ENCODE measurements at regions of chr6 and their contacts with region 1.

Region 1: DNA sequence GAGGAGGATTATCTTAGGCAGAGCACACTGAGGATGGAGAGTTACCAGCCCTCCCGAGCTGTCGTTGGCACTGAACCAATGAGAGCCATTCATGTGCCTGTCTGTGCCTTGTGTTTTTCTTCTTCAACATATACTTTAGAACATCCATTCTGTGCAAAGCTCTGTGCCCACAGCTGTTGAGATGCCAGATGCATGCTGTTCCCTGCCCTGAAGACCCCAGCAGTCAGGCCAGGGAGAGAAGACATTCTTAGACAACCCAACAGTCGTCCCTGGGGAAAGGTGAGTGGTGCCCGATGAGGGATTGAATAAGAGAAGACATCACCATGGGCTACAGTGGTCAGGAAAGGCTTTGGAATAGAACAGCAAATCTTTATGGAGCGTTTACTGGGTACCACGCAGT is 114.1 kb downstream of the NRN1 start:
- DNase-seq: no peak

Region 2: DNA sequence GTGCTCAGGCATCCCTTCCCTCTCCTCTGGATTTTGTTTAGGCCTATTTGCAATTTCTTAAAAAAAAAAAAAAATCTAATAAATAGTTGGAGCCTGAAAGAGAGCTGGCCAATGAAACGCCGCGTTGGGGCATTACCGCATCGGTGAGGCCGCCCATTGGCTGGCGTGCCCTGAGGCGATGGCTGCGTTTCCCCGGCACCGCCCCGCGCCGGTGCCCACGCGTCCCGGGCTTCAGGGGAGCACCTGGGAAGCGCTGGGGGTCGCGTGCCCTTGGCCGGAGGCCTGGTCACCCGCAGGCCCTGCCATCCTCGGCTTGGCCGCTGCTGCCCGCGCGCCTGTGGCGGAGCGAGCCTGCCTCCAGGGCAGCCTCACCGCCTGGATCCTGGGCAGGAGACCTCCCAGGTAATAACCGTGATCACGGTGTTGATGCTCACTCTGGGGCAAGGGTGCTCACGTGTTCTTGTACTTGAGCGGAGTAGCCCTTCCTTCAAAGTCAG is 41.4 kb before region 1 on chr6:
- CTCF ChIA-PET with region 1: no interaction called
- POLR2A ChIA-PET with region 1: no interaction called
- DNase-seq: no peak

Region 3: DNA sequence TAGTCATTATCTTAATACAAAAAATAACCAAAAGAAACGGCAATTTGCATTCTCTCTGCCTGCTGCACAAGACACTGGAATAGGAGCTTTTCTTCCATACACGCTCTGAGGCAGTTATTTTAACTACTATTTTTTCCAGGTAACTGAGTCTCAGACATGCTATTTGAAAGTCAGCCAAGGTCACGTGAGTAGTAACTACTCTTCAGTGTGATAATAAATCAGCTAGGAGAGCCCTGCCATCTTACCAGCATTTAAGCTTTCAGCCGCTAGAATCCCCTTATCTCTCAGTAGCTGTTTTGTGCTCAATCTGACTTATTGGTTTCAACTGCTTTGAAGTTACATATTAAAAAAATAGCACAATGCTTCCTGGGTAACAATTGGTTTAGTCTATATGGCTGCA is 29.6 kb after region 1 on chr6:
- CTCF ChIA-PET with region 1: interaction called, 11 read pairs
- POLR2A ChIA-PET with region 1: no interaction called
- DNase-seq: no peak

Region 4: GRCh38 chr6:5968817-5969734 is 76.4 kb after region 1 on chr6:
- CTCF ChIA-PET with region 1: no interaction called
- POLR2A ChIA-PET with region 1: no interaction called
- DNase-seq: no peak